GM10248 (cell line): ENCODE measurements at regions of chr2 and their contacts with region 1.

Region 1: GRCh38 chr2:190932514-190932913 is 51.9 kb downstream of the GLS start:
- DNase-seq: no peak
- CTCF ChIP-seq: no peak

Region 2: DNA sequence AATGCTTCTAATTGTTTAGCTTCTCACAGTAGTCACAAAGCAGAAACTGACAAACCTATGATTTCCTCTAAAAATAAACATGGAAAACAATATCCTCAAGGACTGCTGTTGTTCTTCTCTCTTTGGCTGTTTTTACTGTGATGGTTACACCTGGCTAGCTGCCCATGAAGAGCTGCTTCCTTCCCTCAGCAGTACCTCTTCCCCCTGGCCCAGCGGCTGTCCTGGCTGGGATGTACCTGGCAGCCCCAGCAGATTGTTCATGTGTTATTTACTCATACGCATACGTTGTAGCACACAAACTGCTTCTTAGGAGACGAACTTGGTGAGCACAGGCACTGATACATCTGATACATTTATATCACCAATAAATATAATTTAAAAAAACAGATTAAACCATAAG is 425.4 kb before region 1 on chr2:
- CTCF ChIA-PET with region 1: no interaction called
- POLR2A ChIA-PET with region 1: no interaction called
- DNase-seq: no peak
- CTCF ChIP-seq: no peak

Region 3: DNA sequence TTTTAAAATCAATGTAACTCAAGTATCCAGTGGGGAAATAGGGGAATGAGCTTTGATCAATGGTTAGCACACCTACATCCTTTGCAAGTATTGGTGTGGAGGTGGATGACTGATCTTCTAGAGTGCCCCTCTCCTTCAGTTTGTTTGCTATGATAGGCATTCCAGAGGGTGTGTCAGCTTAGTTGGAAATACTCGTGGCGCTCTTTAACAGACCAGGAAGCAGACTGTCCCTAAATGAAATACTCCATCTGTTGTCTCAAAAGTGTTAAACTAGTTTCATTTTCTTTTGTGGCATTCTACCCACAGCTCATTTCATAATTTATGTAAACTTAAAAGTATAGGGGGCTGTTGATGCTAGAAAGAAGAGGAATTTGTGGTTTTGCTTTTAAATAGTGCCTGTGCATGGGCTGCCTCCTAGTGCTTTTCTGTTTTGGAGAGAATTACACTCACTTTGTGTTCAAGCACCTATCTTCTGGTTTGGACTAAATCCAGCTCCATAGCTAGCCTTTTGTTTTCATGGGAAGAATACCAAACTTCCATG is 15.3 kb after region 1 on chr2:
- CTCF ChIA-PET with region 1: interaction called, 14 read pairs
- POLR2A ChIA-PET with region 1: no interaction called
- DNase-seq: peak; percentile 14
- CTCF ChIP-seq: peak; percentile 22